Activated naive CD4-positive, alpha-beta T cell treated with anti-CD3 and anti-CD28 coated beads for 36 hours (primary cell): ENCODE measurements at regions of chr10 and their contacts with region 1.

Region 1: GRCh38 chr10:16891375-16892313 is 74.4 kb upstream of the RSU1 start:
- DNase-seq: peak; percentile 71
- H3K4me3 Mint-ChIP-seq: peak overlapping the region; percentile 52
- H3K27ac Mint-ChIP-seq: peak overlapping the region; percentile 69
- H3K4me1 Mint-ChIP-seq: peaks cover 8% of the 10 kb centered on the region
- H3K27me3 Mint-ChIP-seq: no peaks in the 10 kb centered on the region

Region 2: DNA sequence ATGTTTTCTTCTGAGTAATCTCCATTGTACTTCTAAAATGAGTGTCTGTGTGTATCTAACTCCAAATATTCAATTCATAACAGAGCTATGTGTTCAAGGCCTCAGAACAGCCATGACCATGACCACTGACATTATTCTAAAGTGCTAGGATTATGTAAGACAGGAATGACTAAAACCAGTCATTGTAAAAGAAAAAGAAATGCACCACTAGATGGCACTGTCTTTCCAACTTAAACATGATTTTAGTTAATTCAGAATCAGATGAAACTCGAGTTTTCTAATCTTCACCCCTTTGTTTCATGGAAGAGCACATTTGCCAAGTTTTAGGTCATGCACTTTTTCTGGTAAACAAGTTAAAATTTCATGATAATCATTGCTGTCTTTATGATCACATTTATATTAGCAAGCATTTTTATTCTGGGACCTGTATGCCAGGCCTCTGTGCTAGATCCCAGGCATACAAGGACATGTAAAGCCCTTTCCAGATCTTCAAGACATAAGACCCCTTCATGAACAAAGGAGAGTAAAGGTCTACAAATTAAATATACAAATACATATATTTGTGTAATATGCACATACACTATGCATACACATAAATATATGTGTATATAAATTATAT is 48.3 kb before region 1 on chr10:
- CTCF ChIA-PET with region 1: interaction called, 6 read pairs
- intact Hi-C with region 1: loop called (anchors 1 kb)
- DNase-seq: no peak
- H3K4me3 Mint-ChIP-seq: no peak overlapping the region
- H3K27ac Mint-ChIP-seq: no peak overlapping the region
- H3K4me1 Mint-ChIP-seq: no peaks in the 10 kb centered on the region
- H3K27me3 Mint-ChIP-seq: no peaks in the 10 kb centered on the region

Region 3: DNA sequence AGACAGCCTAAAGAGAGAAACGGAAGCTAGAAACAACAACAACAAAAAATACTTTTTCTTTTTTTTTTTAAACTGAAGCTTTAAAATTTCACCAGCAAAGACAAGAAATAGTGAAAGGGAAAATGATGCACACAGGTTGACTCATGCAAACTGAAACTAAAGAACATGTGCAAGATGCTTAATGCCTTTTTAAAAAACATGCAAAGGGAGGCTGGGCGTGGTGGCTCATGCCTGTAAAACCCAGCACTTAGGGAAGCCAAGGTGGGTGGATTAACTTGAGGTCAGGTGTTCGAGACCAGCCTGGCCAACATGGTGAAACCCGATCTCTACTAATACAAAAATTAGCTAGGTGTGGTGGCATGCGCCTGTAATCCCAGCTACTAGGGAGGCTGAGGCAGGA is 253.1 kb after region 1 on chr10:
- CTCF ChIA-PET with region 1: no interaction called
- intact Hi-C with region 1: loop called (anchors 1 kb)
- DNase-seq: peak; percentile 84
- H3K4me3 Mint-ChIP-seq: no peak overlapping the region
- H3K27ac Mint-ChIP-seq: peak overlapping the region; percentile 47
- H3K4me1 Mint-ChIP-seq: peaks cover 28% of the 10 kb centered on the region
- H3K27me3 Mint-ChIP-seq: no peaks in the 10 kb centered on the region

Region 4: GRCh38 chr10:17249820-17250219 is 358.2 kb after region 1 on chr10:
- CTCF ChIA-PET with region 1: interaction called, 4 read pairs
- intact Hi-C with region 1: loop called (anchors 1 kb)
- DNase-seq: no peak
- H3K4me3 Mint-ChIP-seq: no peak overlapping the region
- H3K27ac Mint-ChIP-seq: no peak overlapping the region
- H3K4me1 Mint-ChIP-seq: no peaks in the 10 kb centered on the region
- H3K27me3 Mint-ChIP-seq: no peaks in the 10 kb centered on the region